ENCODE measurements at regions of chr7 and their contacts with region 1.

Region 1: GRCh38 chr7:123494193-123494796 is 40.1 kb downstream of the IQUB start:
- DNase-seq: no peak
- H3K4me3 ChIP-seq: no peak overlapping the region
- H3K27ac ChIP-seq: no peak overlapping the region
- H3K4me1 ChIP-seq: no peaks in the 10 kb centered on the region
- H3K27me3 ChIP-seq: no peaks in the 10 kb centered on the region
- CTCF ChIP-seq: peak; percentile 18 to 77 (median 58)

Region 2: GRCh38 chr7:123594813-123595241 is 100.5 kb after region 1 on chr7:
- intact Hi-C with region 1: no loop called
- DNase-seq: no peak
- H3K4me3 ChIP-seq: no peak overlapping the region
- H3K27ac ChIP-seq: no peak overlapping the region
- H3K4me1 ChIP-seq: no peaks in the 10 kb centered on the region
- H3K27me3 ChIP-seq: no peaks in the 10 kb centered on the region
- CTCF ChIP-seq: no peak

Region 3: DNA sequence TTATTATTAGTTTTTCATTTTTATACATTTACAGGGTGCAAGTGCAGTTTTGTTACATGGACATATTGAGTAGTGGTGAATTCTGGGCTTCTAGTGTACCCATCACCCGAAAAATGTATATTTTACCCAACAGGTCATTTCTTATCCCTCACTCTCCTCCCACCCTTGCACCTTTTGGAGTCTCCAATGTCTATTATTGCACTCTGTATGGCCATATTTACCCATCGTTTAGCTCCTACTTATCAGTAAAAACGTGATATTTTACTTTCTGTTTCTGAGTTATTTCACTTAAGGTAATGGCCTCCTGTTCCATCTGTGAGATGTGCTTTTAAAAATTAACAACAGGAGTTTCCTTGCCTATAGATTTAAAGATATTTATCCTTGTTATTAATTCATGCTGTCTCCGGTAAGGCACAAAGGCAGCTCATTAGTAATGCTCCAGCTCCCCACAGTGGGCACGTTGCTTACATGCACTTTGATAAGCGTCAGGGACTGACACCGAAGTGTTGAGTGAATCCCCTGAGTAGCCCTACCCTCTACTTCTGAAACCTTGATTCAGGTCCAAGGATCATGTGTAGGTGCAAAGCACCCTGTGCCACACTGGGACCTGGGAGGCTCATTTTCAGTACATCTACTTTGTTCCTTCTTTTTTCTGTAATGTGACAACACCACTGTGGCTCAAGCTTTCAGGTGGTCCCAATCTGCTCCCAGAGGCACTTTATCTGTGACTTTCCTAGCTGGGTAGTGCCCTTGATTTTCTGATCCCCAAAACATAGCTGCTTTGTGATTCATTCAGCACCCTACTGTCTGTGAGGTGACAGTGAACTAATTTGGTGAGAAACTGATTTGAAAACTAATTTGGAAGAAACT is 377.9 kb after region 1 on chr7:
- intact Hi-C with region 1: loop called (anchors 5 kb)
- DNase-seq: no peak
- H3K4me3 ChIP-seq: no peak overlapping the region
- H3K27ac ChIP-seq: no peak overlapping the region
- H3K4me1 ChIP-seq: no peaks in the 10 kb centered on the region
- H3K27me3 ChIP-seq: no peaks in the 10 kb centered on the region
- CTCF ChIP-seq: peak; percentile 14 to 40 (median 29)

Measured in ascending aorta (tissue), 2 donors.